ENCODE measurements at regions of chr10 and their contacts with region 1.

Region 1: DNA sequence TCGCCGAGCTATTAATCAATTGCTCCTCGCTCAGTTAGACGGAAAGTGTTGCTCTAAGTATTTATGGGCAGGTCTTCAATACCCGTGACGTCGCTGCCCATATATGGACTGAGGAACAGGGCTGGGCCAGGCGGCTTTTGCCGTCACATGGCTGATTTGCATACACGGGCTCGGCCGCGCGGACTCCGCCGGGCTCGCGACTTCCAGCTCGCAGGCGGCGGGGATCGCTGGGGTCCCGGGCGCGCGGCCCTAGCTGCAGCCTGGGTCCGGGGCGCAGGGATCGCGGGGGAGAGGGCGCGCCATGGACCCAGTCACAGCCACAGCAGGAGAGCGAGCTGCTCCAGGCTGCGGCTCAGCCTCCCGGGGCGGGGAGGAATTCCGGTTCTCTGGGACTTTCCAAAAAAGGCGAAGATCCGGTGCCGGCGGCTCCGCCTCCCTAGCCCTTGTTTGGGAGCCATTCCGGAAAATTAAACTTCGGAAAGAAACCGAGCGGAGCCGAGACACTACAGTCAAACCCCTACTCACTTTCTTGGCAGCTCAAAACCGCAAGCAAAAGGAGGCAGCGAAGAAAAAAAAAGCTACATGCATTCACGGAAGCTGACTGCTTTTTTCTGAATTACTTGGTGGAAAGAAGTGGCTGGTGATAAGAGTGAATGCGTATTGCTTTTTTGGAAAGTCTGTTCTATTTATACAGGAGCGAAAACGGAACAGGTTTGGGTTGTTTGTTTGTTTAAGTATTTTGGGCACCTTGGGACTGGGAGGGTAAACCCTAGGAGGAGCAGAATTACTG is at the start of gene EGR2:
- DNase-seq: peak; percentile 88 to 98
- H3K4me3 ChIP-seq: peak within 1 kb of the TSS; percentile 86 to 88
- H3K27ac ChIP-seq: peak within 1 kb of the TSS; percentile 86 to 89
- H3K4me1 ChIP-seq: peaks cover 22 to 32% of the 10 kb centered on the region in 2 donors
- H3K27me3 ChIP-seq: peaks cover 8% of the 10 kb centered on the region
- CTCF ChIP-seq: no peak
- total RNA-seq, gene EGR2: 11.9 TPM

Region 2: GRCh38 chr10:60944159-60944909 is 1872.2 kb before region 1 on chr10 and contains the start of gene RHOBTB1:
- intact Hi-C with region 1: loop called (anchors 10 kb)
- DNase-seq: peak; percentile 23 to 90
- H3K4me3 ChIP-seq: peak within 1 kb of the TSS; percentile 88 to 94
- H3K27ac ChIP-seq: peak within 1 kb of the TSS; percentile 100
- H3K4me1 ChIP-seq: peaks cover 0 to 11% of the 10 kb centered on the region in 2 donors
- H3K27me3 ChIP-seq: no peaks in the 10 kb centered on the region
- CTCF ChIP-seq: no peak
- total RNA-seq, gene RHOBTB1: 13.6 TPM

Region 3: GRCh38 chr10:62373995-62374861 is 442.3 kb before region 1 on chr10 and contains the start of gene ZNF365:
- intact Hi-C with region 1: loop called (anchors 5 kb)
- DNase-seq: peak in 1 of 2 donors; percentile 77
- H3K4me3 ChIP-seq: peak within 1 kb of the TSS; percentile 55 to 93
- H3K27ac ChIP-seq: peak within 1 kb of the TSS; percentile 70 to 82
- H3K4me1 ChIP-seq: peaks cover 4% of the 10 kb centered on the region in 2 donors
- H3K27me3 ChIP-seq: no peaks in the 10 kb centered on the region
- CTCF ChIP-seq: peak in 1 of 3 experiments; percentile 8
- total RNA-seq, gene ZNF365: not detected

Region 4: DNA sequence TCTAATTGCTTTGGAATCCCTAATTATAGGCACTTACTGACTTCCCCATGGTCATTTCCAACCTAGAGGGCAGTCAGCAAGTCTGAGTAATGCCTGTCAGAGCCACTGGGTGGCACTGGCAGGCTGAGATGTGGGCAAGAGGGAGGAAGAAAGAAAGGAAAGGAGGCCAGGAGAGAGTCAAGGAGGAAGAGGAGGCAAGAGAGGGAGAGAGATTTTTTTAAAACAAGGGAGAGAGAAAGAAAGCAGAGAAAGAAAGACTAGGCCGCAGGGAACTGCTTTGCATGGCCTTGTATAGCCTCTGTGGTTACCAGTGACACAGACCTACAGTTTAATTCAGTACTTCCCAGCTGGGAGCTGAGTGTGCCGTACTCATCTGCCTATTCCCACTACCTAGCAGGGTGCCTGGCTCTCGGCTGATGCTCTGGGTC is 222.4 kb before region 1 on chr10:
- intact Hi-C with region 1: loop called (anchors 10 kb)
- DNase-seq: no peak
- H3K4me3 ChIP-seq: no peak overlapping the region
- H3K27ac ChIP-seq: no peak overlapping the region
- H3K4me1 ChIP-seq: no peaks in the 10 kb centered on the region
- H3K27me3 ChIP-seq: no peaks in the 10 kb centered on the region
- CTCF ChIP-seq: peak; percentile 72 to 80 (median 72)

Region 5: DNA sequence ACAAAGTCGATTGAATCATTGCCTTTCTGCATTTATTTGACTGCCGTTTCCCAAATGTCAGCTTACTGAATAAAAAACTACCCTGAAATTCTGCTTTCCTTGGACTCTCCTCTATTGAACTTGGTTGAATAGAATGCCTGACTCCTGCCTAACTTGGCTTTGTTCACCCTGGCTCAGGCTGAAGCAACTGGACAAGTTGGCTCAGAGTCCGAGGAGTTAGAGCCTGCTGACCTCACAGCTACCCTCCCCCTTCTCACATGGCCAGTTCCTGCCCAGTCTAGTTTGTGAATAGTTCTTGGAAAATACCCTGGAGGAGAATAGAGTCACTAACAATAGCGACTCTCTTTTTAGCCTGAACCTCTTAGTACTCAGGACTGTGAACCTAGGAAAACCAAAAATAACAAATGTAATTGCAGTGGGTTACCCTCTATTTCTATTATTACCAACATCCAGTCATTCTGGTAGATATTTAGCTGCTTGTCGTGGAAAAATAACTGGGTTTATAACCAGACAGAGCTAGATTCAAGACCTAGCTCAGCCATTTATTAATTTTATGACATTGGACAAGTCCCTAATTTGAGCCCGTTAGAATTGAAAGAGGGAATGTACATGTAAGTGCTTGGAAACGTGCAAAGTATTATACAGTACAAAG is 299.3 kb after region 1 on chr10:
- intact Hi-C with region 1: loop called (anchors 5 kb)
- DNase-seq: peak; percentile 85 to 96
- H3K4me3 ChIP-seq: no peak overlapping the region
- H3K27ac ChIP-seq: peak overlapping the region; percentile 66 to 80
- H3K4me1 ChIP-seq: peaks cover 5 to 17% of the 10 kb centered on the region in 2 donors
- H3K27me3 ChIP-seq: no peaks in the 10 kb centered on the region
- CTCF ChIP-seq: no peak

Region 6: GRCh38 chr10:63157845-63158624 is 341.5 kb after region 1 on chr10:
- intact Hi-C with region 1: loop called (anchors 5 kb)
- DNase-seq: no peak
- H3K4me3 ChIP-seq: no peak overlapping the region
- H3K27ac ChIP-seq: no peak overlapping the region
- H3K4me1 ChIP-seq: no peaks in the 10 kb centered on the region
- H3K27me3 ChIP-seq: no peaks in the 10 kb centered on the region
- CTCF ChIP-seq: peak; percentile 70 to 85 (median 74)

Region 7: GRCh38 chr10:63711867-63712716 is 895.6 kb after region 1 on chr10:
- intact Hi-C with region 1: loop called (anchors 5 kb)
- DNase-seq: peak; percentile 89 to 98
- H3K4me3 ChIP-seq: peak overlapping the region in 1 of 2 donors; percentile 2
- H3K27ac ChIP-seq: peak overlapping the region; percentile 89 to 91
- H3K4me1 ChIP-seq: peaks cover 8 to 42% of the 10 kb centered on the region in 2 donors
- H3K27me3 ChIP-seq: no peaks in the 10 kb centered on the region
- CTCF ChIP-seq: no peak